ENCODE measurements at regions of chr1 and their contacts with region 1.

Region 1: GRCh38 chr1:26666855-26667254 is 29.0 kb upstream of the ARID1A start:
- DNase-seq: no peak
- ATAC-seq: no peak
- H3K4me3 ChIP-seq: no peak overlapping the region
- H3K27ac ChIP-seq: no peak overlapping the region
- H3K4me1 ChIP-seq: no peaks in the 10 kb centered on the region
- H3K27me3 ChIP-seq: no peaks in the 10 kb centered on the region
- CTCF ChIP-seq: no peak

Region 2: GRCh38 chr1:24779689-24780464 is 1887.0 kb before region 1 on chr1:
- CTCF ChIA-PET with region 1: interaction called, 11 read pairs
- POLR2A ChIA-PET with region 1: no interaction called
- in situ Hi-C with region 1: no loop called
- intact Hi-C with region 1: no loop called
- DNase-seq: no peak
- ATAC-seq: no peak
- H3K4me3 ChIP-seq: no peak overlapping the region
- H3K27ac ChIP-seq: no peak overlapping the region
- H3K4me1 ChIP-seq: no peaks in the 10 kb centered on the region
- H3K27me3 ChIP-seq: no peaks in the 10 kb centered on the region
- CTCF ChIP-seq: no peak

Region 3: DNA sequence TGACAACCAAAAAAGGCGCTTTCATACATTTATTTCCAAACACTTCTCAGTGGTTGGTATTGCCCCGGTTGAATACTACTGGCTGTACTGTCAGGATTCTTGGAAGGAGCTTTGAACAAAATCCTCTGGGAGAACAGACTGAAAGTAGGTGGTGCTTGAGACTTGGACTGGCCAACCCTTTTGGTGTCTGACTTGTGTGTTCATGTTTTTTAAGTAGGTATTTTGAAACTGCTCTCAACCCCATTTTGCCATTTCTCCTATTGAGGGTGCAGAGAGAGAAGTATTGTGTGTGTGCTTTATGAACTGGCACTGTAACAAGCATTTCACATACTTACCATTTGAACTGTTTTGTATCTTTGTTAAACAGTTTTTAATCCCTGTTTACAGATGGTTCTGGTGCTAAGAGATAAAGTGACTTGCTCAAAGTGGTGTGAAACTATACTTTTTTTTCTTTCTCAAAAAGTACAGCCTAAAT is 50.2 kb after region 1 on chr1:
- CTCF ChIA-PET with region 1: interaction called, 11 read pairs
- POLR2A ChIA-PET with region 1: no interaction called
- in situ Hi-C with region 1: no loop called
- intact Hi-C with region 1: no loop called
- DNase-seq: no peak
- ATAC-seq: 0 out of 2 replicates have a peak, but pooled peaks have one; percentile 35
- H3K4me3 ChIP-seq: no peak overlapping the region
- H3K27ac ChIP-seq: no peak overlapping the region
- H3K4me1 ChIP-seq: peaks cover 61% of the 10 kb centered on the region
- H3K27me3 ChIP-seq: no peaks in the 10 kb centered on the region
- CTCF ChIP-seq: no peak

Region 4: DNA sequence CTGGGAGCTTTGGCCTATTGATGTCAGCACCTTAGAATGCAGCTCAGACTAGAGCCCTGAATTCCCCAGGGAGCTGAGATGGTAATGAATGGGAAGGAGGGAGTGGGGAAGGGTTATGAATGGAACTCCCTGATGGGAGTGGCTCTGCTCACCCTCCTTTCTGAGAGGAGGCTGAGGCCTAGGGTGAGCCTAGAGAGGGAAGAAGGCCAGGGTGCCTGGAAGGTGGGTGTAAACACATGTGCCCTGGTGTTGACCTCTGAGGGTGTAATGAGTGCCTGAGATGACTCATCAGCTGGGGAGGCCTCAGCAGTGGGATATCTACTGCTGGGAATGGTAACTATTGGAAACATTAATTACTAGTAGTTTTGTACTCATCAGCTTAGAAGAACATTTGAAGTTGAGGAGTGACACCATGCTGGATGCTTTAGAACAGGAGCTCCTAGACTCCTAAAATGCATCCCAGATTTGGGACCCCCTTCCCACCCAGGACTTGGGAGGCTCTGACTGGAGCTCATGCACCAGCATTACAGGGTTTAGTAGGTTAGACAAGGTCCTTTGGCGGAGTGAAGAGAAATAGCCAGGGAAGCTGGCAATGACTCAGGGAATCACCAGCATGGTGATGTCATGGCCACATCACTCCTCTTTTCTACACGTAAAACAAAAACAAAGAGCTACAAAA is 104.9 kb after region 1 on chr1:
- CTCF ChIA-PET with region 1: no interaction called
- POLR2A ChIA-PET with region 1: no interaction called
- in situ Hi-C with region 1: no loop called
- intact Hi-C with region 1: no loop called
- DNase-seq: peak; percentile 64
- ATAC-seq: peak; percentile 85
- H3K4me3 ChIP-seq: no peak overlapping the region
- H3K27ac ChIP-seq: peak overlapping the region; percentile 32; the same call in 1 of the 2 replicates
- H3K4me1 ChIP-seq: peaks cover 16% of the 10 kb centered on the region
- H3K27me3 ChIP-seq: no peaks in the 10 kb centered on the region
- CTCF ChIP-seq: no peak

Measured in Panc1 (cell line).